Activated B cell treated with CpG ODN at 0.5 μM for 24 hours (primary cell): ENCODE measurements at regions of chr16 and their contacts with region 1.

Region 1: GRCh38 chr16:1308977-1309885 is at the start of gene UBE2I:
- DNase-seq: peak; percentile 98
- ATAC-seq: peak; percentile 69
- H3K4me3 Mint-ChIP-seq: peak within 1 kb of the TSS; percentile 98
- H3K27ac Mint-ChIP-seq: peak within 1 kb of the TSS; percentile 100
- H3K4me1 Mint-ChIP-seq: peaks cover 67% of the 10 kb centered on the region
- H3K27me3 Mint-ChIP-seq: no peaks in the 10 kb centered on the region
- CTCF ChIP-seq: no peak
- total RNA-seq, gene UBE2I: 220 and 240 TPM in 2 replicates

Region 2: DNA sequence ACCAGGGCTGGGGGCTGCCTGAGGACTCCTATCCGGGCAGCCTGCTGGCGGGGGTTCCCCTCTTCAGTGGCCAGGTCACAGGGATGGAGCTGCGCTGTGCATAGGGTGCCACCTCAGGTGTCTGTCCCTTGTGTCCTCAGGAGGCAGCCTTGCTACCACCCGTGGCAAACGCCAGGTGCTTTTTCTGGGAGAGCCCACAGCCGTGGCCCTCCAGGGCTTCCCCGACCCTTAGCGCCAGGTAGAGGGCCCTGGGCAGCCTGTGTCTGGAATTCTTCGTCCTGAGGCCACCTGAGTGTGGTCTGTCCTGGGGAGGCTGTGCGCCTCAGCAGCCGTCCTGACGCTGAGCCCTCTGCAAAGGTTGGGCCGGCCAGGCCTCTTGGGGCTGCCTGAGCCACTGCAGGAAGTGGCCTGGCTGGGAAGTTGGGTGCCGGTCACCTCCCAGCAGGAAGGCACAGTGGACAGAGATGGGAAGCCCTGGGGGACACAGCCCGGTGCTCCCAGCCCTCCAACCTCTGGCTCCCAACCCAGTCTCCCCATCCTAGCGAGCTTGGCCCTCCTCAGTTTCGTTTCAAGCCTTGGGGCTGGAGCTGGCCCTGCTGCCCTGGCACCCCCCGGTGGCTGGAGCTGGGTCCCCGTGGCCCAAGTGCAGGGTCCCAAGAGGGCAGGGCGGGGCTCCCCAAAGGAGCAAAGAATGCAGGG is 16.6 kb after region 1 on chr16:
- CTCF ChIA-PET with region 1: no interaction called
- POLR2A ChIA-PET with region 1: interaction called, 26 read pairs
- intact Hi-C with region 1: loop called (anchors 2 kb)
- DNase-seq: no peak
- ATAC-seq: peak; percentile 25
- H3K4me3 Mint-ChIP-seq: no peak overlapping the region
- H3K27ac Mint-ChIP-seq: no peak overlapping the region
- H3K4me1 Mint-ChIP-seq: peaks cover 4% of the 10 kb centered on the region
- H3K27me3 Mint-ChIP-seq: no peaks in the 10 kb centered on the region
- CTCF ChIP-seq: no peak

Region 3: DNA sequence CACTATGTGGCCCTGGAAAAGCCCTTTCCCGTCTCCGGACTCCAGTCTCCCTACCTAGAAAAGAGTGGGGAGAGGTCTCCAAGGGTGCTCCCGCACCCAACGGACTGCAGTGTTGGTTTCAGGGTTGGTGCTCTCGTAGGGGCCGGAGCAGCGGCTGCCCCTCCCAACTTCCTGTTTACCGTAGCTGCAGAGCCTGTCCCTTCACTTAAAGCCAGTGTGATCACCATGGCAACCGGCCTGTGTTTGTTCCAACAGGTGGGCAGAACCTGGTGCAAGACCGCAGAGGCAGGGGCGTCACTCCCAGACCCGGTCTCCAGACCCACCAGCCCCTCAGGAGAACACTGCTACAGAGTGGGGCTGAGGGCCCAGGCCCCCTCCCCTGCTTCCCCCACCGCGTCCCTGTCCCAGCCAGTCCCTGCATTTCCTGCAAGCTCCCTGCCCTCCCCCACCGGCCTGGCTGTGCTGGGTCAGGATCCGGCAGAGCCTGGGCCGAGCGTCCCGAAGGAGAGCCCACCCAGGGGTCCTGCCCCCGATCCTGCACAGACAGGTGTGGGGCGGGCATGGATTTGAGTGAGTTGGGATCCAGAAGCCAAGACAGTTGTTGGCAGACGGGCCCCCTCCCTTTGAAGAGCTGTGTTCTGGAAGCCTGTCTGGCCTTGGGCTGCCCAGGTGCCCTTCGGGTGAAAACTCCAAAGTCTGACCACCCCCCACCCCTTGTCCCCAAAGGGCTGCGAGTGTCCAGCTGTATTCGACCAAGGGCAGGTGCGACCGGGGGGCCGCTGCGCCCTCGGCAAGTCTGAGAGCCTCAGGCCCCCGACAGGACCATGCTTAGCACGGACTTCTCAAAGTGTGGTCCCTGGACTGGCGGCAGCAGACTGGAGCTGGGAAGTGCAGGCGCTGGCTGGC is 22.7 kb after region 1 on chr16:
- CTCF ChIA-PET with region 1: interaction called, 4 read pairs
- POLR2A ChIA-PET with region 1: interaction called, 26 read pairs
- intact Hi-C with region 1: loop called (anchors 1 kb)
- DNase-seq: peak; percentile 59
- ATAC-seq: peak; percentile 64
- H3K4me3 Mint-ChIP-seq: peak overlapping the region; percentile 78
- H3K27ac Mint-ChIP-seq: peak overlapping the region; percentile 86
- H3K4me1 Mint-ChIP-seq: peaks cover 36% of the 10 kb centered on the region
- H3K27me3 Mint-ChIP-seq: peaks cover 7% of the 10 kb centered on the region
- CTCF ChIP-seq: no peak

Region 4: GRCh38 chr16:1342526-1343427 is 33.5 kb after region 1 on chr16:
- CTCF ChIA-PET with region 1: no interaction called
- POLR2A ChIA-PET with region 1: interaction called, 18 read pairs
- intact Hi-C with region 1: loop called (anchors 1 kb)
- DNase-seq: peak; percentile 87
- ATAC-seq: peak; percentile 90
- H3K4me3 Mint-ChIP-seq: peak overlapping the region; percentile 75
- H3K27ac Mint-ChIP-seq: peak overlapping the region; percentile 50
- H3K4me1 Mint-ChIP-seq: peaks cover 20% of the 10 kb centered on the region
- H3K27me3 Mint-ChIP-seq: no peaks in the 10 kb centered on the region
- CTCF ChIP-seq: no peak

Region 5: DNA sequence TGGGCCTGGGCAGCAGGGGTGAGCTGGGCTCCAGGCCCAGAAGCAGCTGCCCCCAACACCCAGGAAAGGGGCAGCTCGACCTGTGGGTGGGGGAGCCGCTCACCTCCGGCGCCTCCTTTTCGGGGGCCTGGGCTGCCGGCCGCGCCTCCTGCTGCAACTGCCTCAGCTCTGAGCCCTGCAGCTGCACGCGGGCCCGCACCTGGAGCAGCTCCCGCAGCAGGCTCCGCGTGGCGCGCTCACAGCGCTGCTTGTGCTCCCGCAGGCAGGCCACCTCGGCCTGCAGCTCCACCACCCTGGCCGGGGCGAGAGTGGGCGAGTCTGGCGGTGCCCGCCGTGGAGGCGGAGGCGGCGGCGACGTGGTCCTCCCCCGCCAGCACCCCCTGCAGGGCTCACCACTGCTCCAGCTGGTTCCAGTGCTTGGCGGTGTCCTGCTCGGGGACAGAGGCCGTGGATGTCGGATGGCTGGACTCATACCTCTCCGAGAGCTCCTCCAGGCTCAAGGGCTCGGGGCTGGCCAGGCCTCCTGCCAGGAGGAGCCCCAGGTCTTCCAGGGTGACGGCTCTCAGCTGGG is 134.3 kb after region 1 on chr16:
- CTCF ChIA-PET with region 1: no interaction called
- POLR2A ChIA-PET with region 1: interaction called, 10 read pairs
- intact Hi-C with region 1: no loop called
- DNase-seq: no peak
- ATAC-seq: no peak
- H3K4me3 Mint-ChIP-seq: no peak overlapping the region
- H3K27ac Mint-ChIP-seq: no peak overlapping the region
- H3K4me1 Mint-ChIP-seq: peaks cover 7% of the 10 kb centered on the region
- H3K27me3 Mint-ChIP-seq: no peaks in the 10 kb centered on the region
- CTCF ChIP-seq: no peak

Region 6: DNA sequence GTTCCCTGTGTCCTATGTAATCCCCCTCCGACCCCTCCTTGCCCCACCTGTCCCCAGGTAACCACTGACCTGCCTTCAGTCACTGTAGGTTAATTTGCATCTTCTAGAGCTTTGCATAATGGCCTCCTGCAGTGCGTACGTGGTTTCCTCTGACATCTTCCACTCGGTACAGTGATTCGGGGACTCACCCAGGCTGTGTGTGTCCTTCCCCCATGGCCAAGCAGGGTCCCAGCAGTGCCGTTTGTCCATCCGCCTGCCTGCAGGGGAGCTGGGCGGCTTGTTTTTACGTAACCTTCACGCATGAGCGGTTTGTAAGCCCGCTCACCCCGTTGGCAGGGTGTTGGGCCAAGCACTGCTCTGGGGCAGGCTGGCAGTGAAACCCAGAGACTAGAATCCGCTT is 404.7 kb after region 1 on chr16:
- CTCF ChIA-PET with region 1: no interaction called
- POLR2A ChIA-PET with region 1: interaction called, 3 read pairs
- intact Hi-C with region 1: loop called (anchors 5 kb)
- DNase-seq: peak; percentile 49
- ATAC-seq: peak; percentile 90
- H3K4me3 Mint-ChIP-seq: peak overlapping the region; percentile 70
- H3K27ac Mint-ChIP-seq: peak overlapping the region; percentile 94
- H3K4me1 Mint-ChIP-seq: peaks cover 76% of the 10 kb centered on the region
- H3K27me3 Mint-ChIP-seq: no peaks in the 10 kb centered on the region
- CTCF ChIP-seq: no peak